Cardiac septum (tissue), 1 donor: ENCODE measurements at regions of chr20 and their contacts with region 1.

Region 1: DNA sequence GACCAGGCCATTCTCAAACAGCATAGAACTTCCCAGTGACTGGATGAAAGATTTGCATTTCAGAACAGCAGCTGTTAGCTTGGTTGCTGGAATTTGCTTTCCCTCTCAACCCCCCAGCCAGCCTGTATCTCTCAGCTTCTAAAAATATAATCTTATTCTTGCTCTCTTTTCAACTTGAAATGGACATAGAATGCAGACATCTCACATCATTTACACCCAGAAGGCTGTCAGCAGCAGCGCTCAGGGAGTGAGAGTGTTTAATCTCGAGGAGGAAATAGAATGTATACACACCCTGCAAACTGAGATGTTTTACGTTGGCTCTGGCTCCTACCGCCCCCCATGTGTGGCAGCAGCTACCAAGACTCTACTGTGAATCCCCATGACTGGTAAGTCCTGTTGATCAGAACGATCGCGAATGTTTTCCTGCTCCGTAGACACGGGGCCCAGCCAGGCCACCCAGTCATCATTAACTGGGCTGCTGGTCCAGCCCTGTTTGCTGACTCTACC is 163.4 kb upstream of the SLC24A3 start:
- DNase-seq: no peak

Region 2: GRCh38 chr20:19025430-19026120 is 23.5 kb before region 1 on chr20:
- intact Hi-C with region 1: loop called (anchors 1 kb)
- DNase-seq: no peak